Heart left ventricle (tissue), 16 donors: ENCODE measurements at regions of chr17 and their contacts with region 1.

Region 1: GRCh38 chr17:35568541-35568940 is 7.9 kb upstream of the SLFN14 start:
- DNase-seq: no peak
- ATAC-seq: peak in 1 of 4 donors; percentile 23
- H3K4me3 ChIP-seq: peak overlapping the region; percentile 53 to 85 (median 76)
- H3K27ac ChIP-seq: peak overlapping the region in 9 of 12 donors; percentile 73 to 91 (median 86)
- H3K4me1 ChIP-seq: peaks cover 2 to 29% (median 18%) of the 10 kb centered on the region in 12 donors
- H3K27me3 ChIP-seq: no peaks in the 10 kb centered on the region
- CTCF ChIP-seq: no peak
- POLR2A ChIP-seq: no peak

Region 2: GRCh38 chr17:35630530-35631148 is 62.1 kb after region 1 on chr17:
- intact Hi-C with region 1: loop called in 1 of 10 experiments (anchors 10 kb)
- DNase-seq: no peak
- ATAC-seq: peak in 3 of 4 donors; percentile 31 to 49 (median 37)
- H3K4me3 ChIP-seq: no peak overlapping the region
- H3K27ac ChIP-seq: no peak overlapping the region
- H3K4me1 ChIP-seq: peaks cover 0 to 5% (median 0%) of the 10 kb centered on the region in 12 donors
- H3K27me3 ChIP-seq: no peaks in the 10 kb centered on the region
- CTCF ChIP-seq: no peak
- POLR2A ChIP-seq: no peak